Activated CD4-positive, alpha-beta T cell treated with anti-CD3 and anti-CD28 coated beads, Interleukin-2, amount 10 ng/mL, durations not matched to agents 24 days and 14 days (primary cell): ENCODE measurements at regions of chr9 and their contacts with region 1.

Region 1: DNA sequence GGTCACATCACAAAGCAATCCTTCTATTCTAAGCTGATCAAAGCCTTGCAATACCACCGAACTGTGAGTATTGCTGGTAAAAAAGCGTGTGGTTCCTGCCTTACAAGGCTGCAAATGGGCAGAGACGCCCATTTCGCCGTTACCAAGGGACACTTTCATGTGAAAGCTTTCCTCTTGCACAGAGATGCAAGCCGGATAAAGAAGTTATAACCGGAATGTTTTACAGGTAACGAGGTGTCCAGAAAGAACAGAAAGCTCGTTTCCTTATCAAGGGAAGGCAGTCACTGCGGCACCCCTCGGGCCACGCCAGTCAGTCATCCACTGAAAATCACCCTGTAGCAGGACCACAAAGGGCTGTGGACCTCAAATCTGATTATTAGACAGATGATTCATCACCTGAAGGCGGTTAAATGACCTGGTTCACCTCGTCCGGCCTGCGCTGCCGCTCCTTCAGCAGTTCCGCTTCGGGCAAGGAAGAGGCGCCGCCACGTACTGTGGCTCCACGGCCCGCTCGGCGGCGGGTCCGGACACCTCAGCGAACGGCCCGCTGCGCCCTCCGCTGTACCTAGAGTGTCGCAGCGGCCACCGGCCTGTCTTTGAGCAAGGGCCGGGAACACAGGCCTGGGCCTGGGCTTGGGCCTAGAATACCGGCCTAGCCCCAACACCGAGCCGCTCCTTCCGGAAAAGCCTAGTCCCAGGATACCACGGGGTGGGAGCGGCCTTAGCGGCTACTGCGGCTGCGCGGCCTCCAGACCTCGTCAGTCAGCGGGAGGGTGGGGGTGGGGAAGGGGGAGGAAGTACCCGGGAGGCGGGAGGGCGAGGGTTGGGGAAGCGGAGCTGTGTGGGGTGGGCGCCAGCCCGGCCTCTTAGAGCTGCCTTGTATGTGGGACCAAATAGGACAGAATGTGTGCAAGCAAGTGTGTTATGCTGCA is at the start of gene KLHL9:
- DNase-seq: peak; percentile 94
- H3K4me3 Mint-ChIP-seq: peak within 1 kb of the TSS; percentile 92
- H3K27ac Mint-ChIP-seq: peak within 1 kb of the TSS; percentile 90
- H3K4me1 Mint-ChIP-seq: peaks cover 33% of the 10 kb centered on the region
- H3K27me3 Mint-ChIP-seq: peaks cover 15% of the 10 kb centered on the region
- total RNA-seq, gene KLHL9: 14.8 and 15.0 TPM in 2 replicates

Region 2: GRCh38 chr9:21047281-21047691 is 287.7 kb before region 1 on chr9:
- intact Hi-C with region 1: no loop called
- DNase-seq: no peak
- H3K4me3 Mint-ChIP-seq: no peak overlapping the region
- H3K27ac Mint-ChIP-seq: no peak overlapping the region
- H3K4me1 Mint-ChIP-seq: peaks cover 5% of the 10 kb centered on the region
- H3K27me3 Mint-ChIP-seq: peaks cover 5% of the 10 kb centered on the region

Region 3: DNA sequence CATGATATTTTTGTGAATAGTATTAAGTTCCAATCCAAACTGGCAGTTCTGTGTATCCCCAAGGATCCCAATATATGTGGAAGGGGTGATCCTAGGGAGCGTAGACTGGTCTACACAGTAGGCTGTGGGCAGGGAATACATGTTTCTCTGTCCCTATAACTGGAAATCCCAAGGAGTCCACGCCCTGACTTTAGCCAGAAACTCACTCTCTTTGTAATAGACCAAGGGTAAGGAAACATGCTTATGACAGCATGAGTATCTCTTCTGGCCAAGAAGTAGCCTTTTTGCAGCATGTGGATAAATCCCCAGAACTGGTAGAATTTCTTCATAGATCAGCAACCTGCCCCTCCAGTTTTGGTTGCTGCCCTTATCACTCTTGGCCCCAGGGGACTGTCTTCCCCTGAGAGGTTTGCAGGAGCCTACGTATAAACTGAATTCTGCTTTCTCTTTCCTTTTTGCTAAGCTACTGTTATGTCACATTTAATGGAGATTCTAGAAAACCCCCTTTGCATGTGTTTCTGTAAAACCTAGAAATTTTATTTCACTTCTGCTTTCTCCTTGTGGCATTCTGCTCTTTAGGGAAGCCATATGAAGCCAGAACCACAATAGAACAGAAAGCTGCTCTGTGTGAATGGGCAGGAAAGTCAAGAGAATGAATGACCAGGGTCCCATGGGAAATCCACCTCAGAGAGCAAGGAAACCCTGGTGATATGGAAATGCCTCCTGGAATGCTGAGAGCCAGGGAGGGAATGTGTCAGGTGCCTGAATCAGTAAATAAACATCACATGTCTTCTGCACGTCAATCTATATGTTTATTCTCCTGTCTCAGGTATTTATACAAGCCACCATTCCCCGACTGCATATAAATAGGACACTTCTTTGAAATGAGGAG is 46.7 kb after region 1 on chr9:
- intact Hi-C with region 1: loop called (anchors 1 kb)
- DNase-seq: peak; percentile 74
- H3K4me3 Mint-ChIP-seq: no peak overlapping the region
- H3K27ac Mint-ChIP-seq: no peak overlapping the region
- H3K4me1 Mint-ChIP-seq: peaks cover 11% of the 10 kb centered on the region
- H3K27me3 Mint-ChIP-seq: peaks cover 51% of the 10 kb centered on the region

Region 4: DNA sequence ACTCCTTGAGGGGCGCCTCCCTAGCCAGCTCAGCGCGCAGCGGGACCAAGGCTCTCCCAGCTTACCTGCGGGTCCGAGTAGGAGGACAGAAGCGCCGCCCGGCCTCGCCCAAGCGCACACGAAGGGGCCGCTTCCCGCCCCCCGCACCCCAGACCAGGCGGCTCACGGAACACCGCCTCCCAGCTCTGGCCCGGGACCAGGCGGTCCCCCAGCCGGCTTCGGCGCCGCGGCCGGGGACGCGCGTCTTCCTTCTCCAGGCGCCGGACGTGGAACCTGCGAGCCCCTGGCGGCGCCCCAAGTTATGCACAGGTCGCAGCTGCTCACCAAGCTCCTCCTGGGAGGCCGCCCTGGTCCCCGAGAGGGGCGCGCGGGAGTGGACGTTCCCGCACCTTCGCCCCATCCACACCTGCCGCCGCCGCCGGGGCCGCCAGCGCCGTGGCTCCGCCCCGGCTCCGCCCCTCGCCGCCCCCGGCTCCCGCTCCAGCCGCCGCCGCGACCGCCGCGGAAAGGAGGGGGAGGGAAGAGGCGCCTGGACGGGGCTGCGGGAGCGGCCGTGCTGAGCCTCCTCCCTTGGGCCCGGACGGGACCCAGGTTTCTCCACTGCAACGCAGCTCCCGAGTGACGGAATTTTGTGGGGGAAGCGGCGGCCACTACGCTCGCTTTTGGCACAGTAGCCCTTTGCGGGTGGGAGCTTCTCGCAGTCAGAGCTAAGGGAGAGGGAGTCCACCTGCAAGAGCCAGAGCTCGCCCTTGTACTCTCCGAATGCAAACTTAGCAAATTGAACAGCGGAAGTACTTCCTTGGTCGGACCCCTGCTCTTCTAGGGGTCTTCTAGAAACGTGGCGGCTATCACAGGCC is 224.7 kb after region 1 on chr9:
- intact Hi-C with region 1: loop called (anchors 10 kb)
- DNase-seq: peak; percentile 84
- H3K4me3 Mint-ChIP-seq: peak overlapping the region; percentile 85
- H3K27ac Mint-ChIP-seq: no peak overlapping the region
- H3K4me1 Mint-ChIP-seq: peaks cover 17% of the 10 kb centered on the region
- H3K27me3 Mint-ChIP-seq: peaks cover 60% of the 10 kb centered on the region

Region 5: DNA sequence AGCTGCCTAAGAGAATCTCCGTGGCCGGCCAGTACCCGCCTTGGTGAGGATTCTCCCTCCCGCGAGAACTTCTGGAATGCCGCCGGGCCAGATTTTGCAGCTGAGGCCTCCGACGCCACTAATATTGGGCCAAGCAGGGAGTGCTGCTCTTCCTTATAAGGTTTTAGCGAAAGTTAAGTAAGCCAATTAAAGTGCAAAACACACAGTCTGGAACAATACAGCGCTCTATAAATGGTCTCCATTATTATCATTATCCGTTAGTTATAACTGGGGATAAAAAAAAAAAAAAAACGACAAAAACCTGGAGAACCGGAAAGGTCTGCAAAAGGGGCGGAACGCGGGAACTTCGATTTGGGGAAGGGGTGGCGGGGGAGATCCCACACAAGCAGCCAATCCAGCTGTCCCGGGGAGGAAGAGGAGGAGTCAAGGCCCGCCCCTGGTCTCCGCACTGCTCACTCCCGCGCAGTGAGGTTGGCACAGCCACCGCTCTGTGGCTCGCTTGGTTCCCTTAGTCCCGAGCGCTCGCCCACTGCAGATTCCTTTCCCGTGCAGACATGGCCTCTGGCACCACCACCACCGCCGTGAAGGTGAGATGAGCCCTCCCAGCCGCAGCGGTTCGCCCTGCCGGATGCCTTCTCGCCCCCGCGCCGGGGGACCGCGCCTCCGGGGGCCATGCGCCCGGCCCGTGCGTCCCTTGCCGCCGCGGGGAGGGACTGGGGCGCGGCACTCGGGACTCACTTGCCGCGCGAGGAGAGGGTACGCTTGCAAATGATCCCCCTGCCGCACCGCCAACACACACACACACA is 467.4 kb after region 1 on chr9 and contains the start of gene MTAP:
- intact Hi-C with region 1: loop called (anchors 5 kb)
- DNase-seq: peak; percentile 91
- H3K4me3 Mint-ChIP-seq: peak within 1 kb of the TSS; percentile 99
- H3K27ac Mint-ChIP-seq: peak within 1 kb of the TSS; percentile 99
- H3K4me1 Mint-ChIP-seq: peaks cover 38% of the 10 kb centered on the region
- H3K27me3 Mint-ChIP-seq: peaks cover 31% of the 10 kb centered on the region
- total RNA-seq, gene MTAP: 55.9 and 58.1 TPM in 2 replicates